ENCODE measurements at regions of chr18 and their contacts with region 1.

Region 1: DNA sequence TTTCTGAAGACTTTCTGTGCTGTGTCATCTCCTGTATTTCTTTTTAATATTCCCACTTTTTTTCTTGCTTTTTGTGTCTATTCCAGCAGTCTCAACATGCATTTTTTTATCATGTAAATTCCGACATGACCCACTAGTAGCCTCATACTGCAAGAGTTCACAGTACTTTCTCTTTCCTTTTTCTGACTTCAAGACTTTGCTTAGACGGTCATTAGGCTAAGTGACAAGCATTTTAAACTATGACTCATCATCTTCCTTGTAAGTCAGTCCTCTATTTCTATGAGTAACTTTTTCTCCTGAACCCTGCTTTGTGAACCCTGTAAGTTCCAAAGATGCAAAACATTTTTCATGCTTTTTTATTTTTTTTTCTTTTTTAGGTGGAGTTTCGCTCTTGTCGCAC is 381.2 kb downstream of the TXNL1 start:
- DNase-seq: no peak
- ATAC-seq: peak; percentile 69
- H3K4me3 Mint-ChIP-seq: no peak overlapping the region
- H3K27ac Mint-ChIP-seq: no peak overlapping the region
- H3K4me1 Mint-ChIP-seq: peaks cover 18% of the 10 kb centered on the region
- H3K27me3 Mint-ChIP-seq: no peaks in the 10 kb centered on the region
- CTCF ChIP-seq: no peak

Region 2: GRCh38 chr18:55243857-55244256 is 1013.3 kb before region 1 on chr18:
- CTCF ChIA-PET with region 1: no interaction called
- POLR2A ChIA-PET with region 1: no interaction called
- intact Hi-C with region 1: loop called (anchors 10 kb)
- DNase-seq: no peak
- ATAC-seq: no peak
- H3K4me3 Mint-ChIP-seq: no peak overlapping the region
- H3K27ac Mint-ChIP-seq: peak overlapping the region; percentile 57
- H3K4me1 Mint-ChIP-seq: peaks cover 82% of the 10 kb centered on the region
- H3K27me3 Mint-ChIP-seq: no peaks in the 10 kb centered on the region
- CTCF ChIP-seq: no peak

Region 3: GRCh38 chr18:56235481-56236013 is 21.7 kb before region 1 on chr18:
- CTCF ChIA-PET with region 1: interaction called, 3 read pairs
- POLR2A ChIA-PET with region 1: no interaction called
- intact Hi-C with region 1: loop called (anchors 1 kb)
- DNase-seq: peak; percentile 28
- ATAC-seq: peak; percentile 93
- H3K4me3 Mint-ChIP-seq: peak overlapping the region; percentile 52
- H3K27ac Mint-ChIP-seq: peak overlapping the region; percentile 86
- H3K4me1 Mint-ChIP-seq: peaks cover 39% of the 10 kb centered on the region
- H3K27me3 Mint-ChIP-seq: no peaks in the 10 kb centered on the region
- CTCF ChIP-seq: no peak

Region 4: GRCh38 chr18:56278421-56279003 is 21.3 kb after region 1 on chr18:
- CTCF ChIA-PET with region 1: no interaction called
- POLR2A ChIA-PET with region 1: no interaction called
- intact Hi-C with region 1: loop called (anchors 1 kb)
- DNase-seq: no peak
- ATAC-seq: no peak
- H3K4me3 Mint-ChIP-seq: no peak overlapping the region
- H3K27ac Mint-ChIP-seq: no peak overlapping the region
- H3K4me1 Mint-ChIP-seq: peaks cover 26% of the 10 kb centered on the region
- H3K27me3 Mint-ChIP-seq: no peaks in the 10 kb centered on the region
- CTCF ChIP-seq: no peak

Region 5: DNA sequence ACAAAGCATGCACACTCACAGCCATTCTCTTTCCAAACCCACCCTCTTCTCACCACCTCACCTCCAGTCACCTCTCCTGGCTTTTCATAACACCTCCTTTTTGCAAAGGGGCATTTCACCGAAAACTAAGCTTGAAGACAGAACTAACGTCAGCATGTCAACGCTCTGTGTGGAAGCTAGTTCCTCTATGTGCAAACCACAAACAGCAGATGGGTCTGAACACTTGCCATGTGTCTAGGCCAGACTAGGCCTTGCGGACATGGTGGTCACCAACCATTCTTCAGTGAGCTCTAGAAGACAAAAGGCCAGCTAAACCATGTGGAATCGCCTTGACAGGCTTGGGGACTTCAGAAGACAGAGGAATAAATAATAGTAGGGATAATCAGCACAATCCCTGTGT is 232.7 kb after region 1 on chr18:
- CTCF ChIA-PET with region 1: no interaction called
- POLR2A ChIA-PET with region 1: no interaction called
- intact Hi-C with region 1: no loop called
- DNase-seq: no peak
- ATAC-seq: no peak
- H3K4me3 Mint-ChIP-seq: no peak overlapping the region
- H3K27ac Mint-ChIP-seq: no peak overlapping the region
- H3K4me1 Mint-ChIP-seq: no peaks in the 10 kb centered on the region
- H3K27me3 Mint-ChIP-seq: peaks cover 3% of the 10 kb centered on the region
- CTCF ChIP-seq: no peak

Measured in activated B cell treated with CpG ODN at 0.5 μM for 24 hours (primary cell).